Colonic mucosa (tissue), 4 donors: ENCODE measurements at regions of chr11 and their contacts with region 1.

Region 1: DNA sequence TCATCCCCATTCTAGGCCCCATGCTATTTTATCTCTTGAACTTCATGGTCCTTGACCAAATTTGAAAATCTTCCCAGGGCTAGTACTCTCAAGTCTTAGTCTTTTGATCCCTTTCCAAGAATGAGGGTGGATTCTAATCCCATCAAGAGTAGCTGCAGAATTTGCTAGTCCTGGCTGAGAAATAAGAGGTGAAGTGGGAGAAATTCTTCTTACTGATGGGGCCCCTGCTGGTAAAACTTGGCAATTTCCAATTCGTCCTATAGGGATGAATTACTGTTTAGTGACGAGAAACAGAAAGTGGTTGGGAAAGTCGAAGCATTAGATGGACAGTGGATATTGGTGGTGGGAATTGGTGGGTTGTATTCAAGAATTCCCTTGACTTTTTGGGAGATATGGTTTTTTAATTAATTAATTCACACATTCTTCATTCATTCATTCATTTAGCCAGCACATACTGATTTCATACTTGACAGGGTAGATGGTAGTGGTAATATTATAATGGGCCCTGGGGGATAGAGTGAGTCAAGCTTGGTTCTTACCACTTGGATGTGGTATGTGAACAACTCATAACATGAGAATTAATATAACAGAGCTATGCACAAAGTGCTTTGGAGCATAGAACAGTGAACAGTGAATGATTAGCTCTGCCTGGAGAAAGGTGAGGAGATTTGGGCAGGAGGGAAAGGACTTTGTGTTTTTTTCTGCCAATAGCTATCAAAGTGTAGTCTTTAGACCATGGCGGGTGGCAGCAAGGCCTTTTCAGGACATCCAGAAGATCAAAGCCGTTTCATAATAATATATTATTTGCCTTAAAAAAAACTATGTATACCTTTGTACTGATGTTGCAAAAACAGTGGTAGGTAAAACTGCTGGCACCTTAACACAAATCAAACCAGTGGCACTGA is 103.8 kb downstream of the STIM1 start:
- DNase-seq: no peak
- H3K4me3 ChIP-seq: no peak overlapping the region
- H3K27ac ChIP-seq: no peak overlapping the region
- H3K4me1 ChIP-seq: no peaks in the 10 kb centered on the region
- H3K27me3 ChIP-seq: no peaks in the 10 kb centered on the region
- CTCF ChIP-seq: no peak

Region 2: DNA sequence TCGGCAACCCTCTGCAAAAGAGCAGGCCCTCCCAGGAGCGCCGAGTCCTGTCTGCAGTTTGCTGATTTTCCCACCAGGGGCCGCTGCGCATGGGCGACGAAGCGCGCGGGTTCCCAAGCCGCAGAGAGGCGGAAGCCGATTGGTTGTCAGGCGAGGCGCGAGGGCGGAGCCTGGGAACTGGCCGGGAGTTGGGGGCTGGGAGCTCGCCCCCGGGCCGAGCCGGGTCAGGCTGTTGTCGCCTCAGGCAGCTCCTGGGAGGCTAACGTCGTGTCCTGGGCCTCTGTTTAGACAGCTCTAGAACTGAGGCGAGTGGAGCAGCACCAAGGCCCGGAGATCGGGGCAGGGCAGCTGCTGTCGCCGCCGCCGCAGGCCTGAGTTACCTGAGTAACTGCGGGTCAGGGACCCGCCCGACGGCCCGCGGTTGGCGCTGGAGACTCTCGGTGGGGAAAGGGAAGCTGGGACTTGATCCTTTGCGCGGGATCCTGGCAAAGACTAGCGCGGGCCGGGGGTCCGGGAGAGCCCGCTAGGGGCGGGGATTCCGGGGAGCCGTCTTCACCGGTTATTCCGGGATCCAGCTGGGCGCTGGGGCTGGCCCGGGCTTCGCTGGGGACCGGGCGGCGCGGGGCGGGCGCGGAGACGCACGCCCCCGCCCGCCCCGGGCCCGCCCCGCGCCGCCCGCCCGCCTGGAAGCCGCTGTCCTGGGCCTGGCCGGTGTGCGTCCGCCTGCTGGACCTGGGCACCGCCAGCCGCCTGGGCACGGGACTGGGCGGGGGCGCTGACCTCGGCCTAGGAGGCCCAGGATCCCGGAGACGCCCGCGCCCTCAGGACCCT is 104.1 kb before region 1 on chr11 and contains the start of gene STIM1:
- intact Hi-C with region 1: loop called (anchors 5 kb)
- DNase-seq: peak; percentile 98
- H3K4me3 ChIP-seq: peak within 1 kb of the TSS; percentile 63
- H3K27ac ChIP-seq: peak within 1 kb of the TSS; percentile 87
- H3K4me1 ChIP-seq: peaks cover 24% of the 10 kb centered on the region
- H3K27me3 ChIP-seq: no peaks in the 10 kb centered on the region
- CTCF ChIP-seq: peak; percentile 95
- total RNA-seq, gene STIM1: 39.1 to 56.8 TPM

Region 3: DNA sequence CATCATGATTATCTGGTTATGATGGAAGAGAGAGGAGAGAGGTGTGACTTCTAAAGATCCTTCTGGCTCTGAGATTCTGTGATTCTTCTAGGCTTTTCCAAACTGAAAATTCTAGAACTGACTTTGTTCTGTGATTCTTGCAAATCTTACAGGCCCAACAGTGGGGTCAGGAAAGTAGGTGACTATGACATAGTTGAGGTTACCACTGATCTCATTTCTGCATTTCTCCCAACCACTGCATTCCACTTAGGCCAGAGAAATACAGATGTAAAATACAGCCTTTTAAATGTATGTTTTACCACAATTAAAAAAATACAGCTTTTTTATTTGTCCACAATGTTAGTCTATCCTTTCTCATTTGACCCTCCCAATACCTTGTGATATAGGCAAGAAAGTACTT is 20.1 kb before region 1 on chr11:
- intact Hi-C with region 1: no loop called
- DNase-seq: no peak
- H3K4me3 ChIP-seq: no peak overlapping the region
- H3K27ac ChIP-seq: no peak overlapping the region
- H3K4me1 ChIP-seq: peaks cover 4% of the 10 kb centered on the region
- H3K27me3 ChIP-seq: no peaks in the 10 kb centered on the region
- CTCF ChIP-seq: no peak